ENCODE measurements at regions of chr12 and their contacts with region 1.

Region 1: DNA sequence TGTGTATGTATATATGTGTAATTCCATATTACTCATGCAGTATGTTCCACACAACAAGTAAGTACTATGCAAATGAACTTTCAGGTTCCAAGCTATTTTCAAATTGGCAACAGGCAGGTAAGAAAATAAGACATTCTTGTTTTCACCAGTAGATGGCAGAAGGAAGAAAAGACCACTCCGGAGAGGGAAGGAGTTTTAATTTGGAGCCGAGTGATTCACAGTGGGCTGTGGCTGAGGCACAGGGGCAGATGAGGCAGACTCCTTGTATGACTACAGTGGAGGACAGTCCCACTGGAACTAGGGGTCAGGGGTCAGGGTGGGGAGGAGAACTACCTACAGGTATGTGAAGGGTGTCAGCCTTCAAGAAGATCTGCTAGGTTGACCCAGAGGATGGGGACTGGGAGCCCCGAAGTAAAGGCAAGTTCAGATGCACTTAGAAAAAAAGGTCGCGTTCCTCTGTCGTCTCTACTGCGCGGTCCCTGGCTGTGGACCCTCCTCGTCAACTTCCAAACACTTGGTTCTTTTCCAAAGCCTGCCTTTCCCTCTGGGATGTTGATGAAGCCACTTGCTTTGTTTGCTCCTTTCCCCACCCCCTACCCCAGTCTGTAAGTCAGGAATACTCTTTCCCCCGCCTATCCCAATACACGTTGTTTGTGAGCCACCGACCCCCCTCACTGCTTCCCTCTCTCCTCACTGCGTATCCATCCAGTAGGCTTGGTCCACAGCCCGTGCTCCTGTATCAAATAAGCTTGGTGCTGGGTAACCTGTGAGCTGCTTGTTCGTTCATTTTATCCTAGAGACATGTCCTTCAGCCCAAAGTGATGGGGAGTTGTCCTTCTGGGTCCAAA is 24.1 kb downstream of the DDX47 start:
- DNase-seq: peak; percentile 91
- H3K4me3 ChIP-seq: no peak overlapping the region
- H3K27ac ChIP-seq: peak overlapping the region; percentile 99
- H3K4me1 ChIP-seq: peaks cover 68% of the 10 kb centered on the region
- H3K27me3 ChIP-seq: no peaks in the 10 kb centered on the region
- CTCF ChIP-seq: peak; percentile 67 to 69

Region 2: GRCh38 chr12:12803186-12803585 is 34.1 kb before region 1 on chr12:
- CTCF ChIA-PET with region 1: interaction called, 4 read pairs
- dilution Hi-C with region 1: no loop called
- in situ Hi-C with region 1: no loop called
- intact Hi-C with region 1: loop called (anchors 1 kb)
- DNase-seq: peak; percentile 100
- H3K4me3 ChIP-seq: no peak overlapping the region
- H3K27ac ChIP-seq: peak overlapping the region; percentile 100
- H3K4me1 ChIP-seq: peaks cover 39% of the 10 kb centered on the region
- H3K27me3 ChIP-seq: no peaks in the 10 kb centered on the region
- CTCF ChIP-seq: no peak

Region 3: DNA sequence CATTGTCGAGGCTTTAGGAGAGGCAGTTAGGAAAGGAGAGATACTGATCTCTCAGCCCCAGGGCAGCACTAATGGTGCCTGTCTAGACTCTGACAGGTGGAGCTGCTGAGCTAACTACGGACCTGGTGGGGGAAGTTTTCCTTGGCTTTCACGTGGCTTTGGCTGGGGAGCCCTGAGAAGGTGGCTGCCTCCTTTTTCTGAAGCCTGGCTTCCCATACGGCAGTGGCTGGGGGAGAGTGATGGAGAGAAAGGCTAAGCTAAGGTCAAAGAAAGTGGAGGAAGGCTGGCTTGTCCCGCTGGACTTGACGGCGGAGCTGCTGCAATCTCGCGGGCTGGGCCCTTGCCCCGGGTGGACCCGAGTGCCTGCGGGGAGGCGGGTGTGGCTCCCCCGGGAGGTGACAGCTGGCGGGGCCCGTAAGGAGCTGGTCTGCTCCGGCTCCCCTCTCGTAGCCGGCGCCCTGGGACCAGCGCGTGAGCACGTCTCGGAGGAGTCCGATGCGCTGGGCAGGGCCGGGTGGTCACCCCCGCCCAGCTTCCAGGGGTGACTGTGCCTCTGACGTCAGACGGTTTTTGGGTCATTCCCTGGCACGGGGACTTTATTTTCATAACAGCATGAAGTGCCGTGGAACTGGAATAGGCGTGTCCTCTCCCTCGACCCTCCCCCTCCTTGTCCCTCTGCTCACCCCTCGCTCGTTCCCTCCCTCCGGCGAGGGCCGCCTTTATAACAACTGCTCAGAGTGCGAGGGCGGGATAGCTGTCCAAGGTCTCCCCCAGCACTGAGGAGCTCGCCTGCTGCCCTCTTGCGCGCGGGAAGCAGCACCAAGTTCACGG is 53.8 kb after region 1 on chr12 and contains the start of gene GPRC5A:
- CTCF ChIA-PET with region 1: interaction called, 8 read pairs
- dilution Hi-C with region 1: loop called (anchors 5 kb)
- in situ Hi-C with region 1: loop called in 1 of 2 experiments (anchors 5 kb)
- intact Hi-C with region 1: loop called (anchors 1 kb)
- DNase-seq: peak; percentile 99
- H3K4me3 ChIP-seq: peak within 1 kb of the TSS; percentile 52 to 61 (median 54)
- H3K27ac ChIP-seq: peak within 1 kb of the TSS; percentile 92
- H3K4me1 ChIP-seq: peaks cover 36% of the 10 kb centered on the region
- H3K27me3 ChIP-seq: no peaks in the 10 kb centered on the region
- CTCF ChIP-seq: peak in 1 of 2 donors; percentile 54
- total RNA-seq, gene GPRC5A: 6.0 to 15.3 TPM

Region 4: DNA sequence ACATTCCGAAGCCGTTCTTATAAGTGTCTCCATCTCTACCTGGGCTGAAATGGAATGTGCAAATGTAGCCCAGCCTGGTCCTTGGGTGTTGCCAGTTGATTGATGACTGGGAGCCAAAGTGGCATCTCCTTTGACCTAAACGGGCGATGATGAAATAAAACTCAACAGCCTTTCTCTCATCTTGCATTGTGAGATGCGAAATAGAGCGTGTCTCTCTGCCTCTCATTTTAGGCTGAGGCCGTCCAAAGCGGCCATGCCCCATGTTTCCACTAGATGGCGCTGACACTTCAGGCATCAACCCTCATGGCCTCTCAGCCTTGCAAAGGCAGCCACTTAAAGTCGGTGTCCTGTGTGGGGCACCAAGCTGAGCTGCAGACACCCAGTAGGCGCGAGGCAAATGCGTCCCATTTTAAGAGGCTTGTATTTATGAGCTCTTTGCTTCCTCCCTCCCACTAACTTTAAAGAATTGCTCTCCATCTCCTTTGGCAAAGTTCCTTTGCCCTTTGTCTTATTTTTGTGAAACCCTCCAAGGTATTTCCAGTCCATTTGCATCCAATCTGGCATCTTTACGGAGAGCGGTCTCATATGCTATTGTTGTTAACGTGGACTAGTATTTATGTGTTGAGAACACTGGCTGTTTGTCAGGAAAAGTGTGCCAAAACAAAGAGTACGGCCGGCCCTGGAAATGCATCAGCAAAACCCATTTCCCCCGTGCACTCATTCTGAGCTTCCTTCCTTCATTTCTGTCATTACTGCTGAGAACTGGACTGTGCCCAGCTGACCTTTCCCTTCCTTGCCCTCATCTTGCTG is 79.1 kb after region 1 on chr12:
- CTCF ChIA-PET with region 1: no interaction called
- dilution Hi-C with region 1: no loop called
- in situ Hi-C with region 1: no loop called
- intact Hi-C with region 1: loop called (anchors 1 kb)
- DNase-seq: peak; percentile 54
- H3K4me3 ChIP-seq: no peak overlapping the region
- H3K27ac ChIP-seq: no peak overlapping the region
- H3K4me1 ChIP-seq: no peaks in the 10 kb centered on the region
- H3K27me3 ChIP-seq: no peaks in the 10 kb centered on the region
- CTCF ChIP-seq: peak; percentile 97 to 99

Region 5: DNA sequence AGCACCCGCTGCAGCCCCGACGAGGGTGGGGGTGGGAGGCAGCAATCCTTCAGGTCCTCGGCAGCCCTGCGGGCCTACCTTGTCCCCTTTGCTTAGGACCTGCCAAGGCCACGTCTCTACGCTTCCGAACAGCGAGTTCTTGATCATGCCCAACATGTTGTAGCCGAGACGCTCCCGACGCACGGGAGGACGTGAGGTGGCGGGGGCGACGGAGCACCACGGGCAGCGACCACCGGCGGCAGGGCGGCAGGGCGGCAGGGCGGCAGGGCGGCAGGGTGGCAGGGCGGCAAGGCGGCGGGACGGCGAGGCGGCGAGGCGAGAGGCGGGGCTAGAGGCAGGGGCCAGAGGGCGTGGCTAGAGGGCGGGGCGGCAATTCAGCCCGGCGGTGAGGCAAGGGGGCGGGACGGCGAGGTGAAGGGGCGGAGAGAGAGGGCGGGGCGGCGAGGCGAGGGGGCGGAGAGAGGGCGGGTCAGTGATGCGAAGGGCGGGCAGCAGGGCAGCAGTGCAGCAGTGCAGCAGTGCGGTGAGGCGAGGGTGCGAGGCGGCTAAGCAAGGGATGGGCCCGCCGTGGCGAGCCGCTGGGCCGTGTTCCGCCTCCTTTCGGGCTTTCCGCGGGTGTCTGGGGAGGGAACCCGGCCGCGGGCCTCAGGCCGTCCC is 162.8 kb after region 1 on chr12 and contains the start of gene HEBP1:
- CTCF ChIA-PET with region 1: no interaction called
- dilution Hi-C with region 1: no loop called
- in situ Hi-C with region 1: loop called in 1 of 2 experiments (anchors 25 kb)
- intact Hi-C with region 1: no loop called
- DNase-seq: peak; percentile 86
- H3K4me3 ChIP-seq: peak within 1 kb of the TSS; percentile 81 to 94 (median 82)
- H3K27ac ChIP-seq: peak within 1 kb of the TSS; percentile 72
- H3K4me1 ChIP-seq: peaks cover 19% of the 10 kb centered on the region
- H3K27me3 ChIP-seq: no peaks in the 10 kb centered on the region
- CTCF ChIP-seq: no peak
- total RNA-seq, gene HEBP1: 13.5 to 36.5 TPM